Naive thymus-derived CD4-positive, alpha-beta T cell (primary cell): ENCODE measurements at regions of chr17 and their contacts with region 1.

Region 1: DNA sequence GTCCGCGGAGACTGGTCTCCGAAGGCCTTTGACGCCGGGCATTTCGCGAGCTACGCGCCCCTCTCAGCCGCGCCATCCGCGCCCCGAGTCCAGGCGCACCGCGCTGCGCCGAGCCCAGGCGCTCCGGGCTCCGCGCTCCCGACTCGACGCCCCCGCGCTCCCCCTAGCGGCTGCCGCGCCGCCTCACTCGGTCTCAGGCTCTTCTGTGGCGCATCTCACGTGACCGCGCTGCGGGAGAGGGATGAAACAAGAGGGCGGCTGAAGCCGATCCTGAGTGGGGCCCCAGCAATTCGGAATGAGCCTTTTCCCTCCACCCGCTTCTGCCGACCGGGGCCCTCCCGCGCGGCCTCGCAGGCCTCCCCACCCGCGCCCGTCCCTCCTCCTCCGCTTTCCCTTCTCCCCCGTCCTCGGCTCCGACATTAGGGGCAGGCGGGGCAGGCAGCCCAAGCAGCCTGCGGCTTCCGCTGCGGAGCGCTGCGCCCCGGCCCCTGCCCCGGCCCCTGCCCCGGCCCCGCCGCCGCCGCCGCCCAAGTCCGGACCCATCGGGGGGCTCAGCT is 42.5 kb upstream of the AMZ2 start:
- DNase-seq: peak; percentile 81 to 96 (median 91)
- ATAC-seq: peak; percentile 94
- H3K4me3 ChIP-seq: peak overlapping the region; percentile 50
- H3K4me3 Mint-ChIP-seq: peak overlapping the region; percentile 82 to 96 (median 88)
- H3K27ac ChIP-seq: peak overlapping the region; percentile 81
- H3K27ac Mint-ChIP-seq: peak overlapping the region in 7 of 9 donors; percentile 62 to 94 (median 88)
- H3K4me1 ChIP-seq: peaks cover 3 to 11% of the 10 kb centered on the region in 2 donors
- H3K4me1 Mint-ChIP-seq: peaks cover 7 to 38% (median 28%) of the 10 kb centered on the region in 7 donors
- H3K27me3 ChIP-seq: no peaks in the 10 kb centered on the region
- H3K27me3 Mint-ChIP-seq: peaks cover 0 to 12% (median 0%) of the 10 kb centered on the region in 5 donors

Region 2: DNA sequence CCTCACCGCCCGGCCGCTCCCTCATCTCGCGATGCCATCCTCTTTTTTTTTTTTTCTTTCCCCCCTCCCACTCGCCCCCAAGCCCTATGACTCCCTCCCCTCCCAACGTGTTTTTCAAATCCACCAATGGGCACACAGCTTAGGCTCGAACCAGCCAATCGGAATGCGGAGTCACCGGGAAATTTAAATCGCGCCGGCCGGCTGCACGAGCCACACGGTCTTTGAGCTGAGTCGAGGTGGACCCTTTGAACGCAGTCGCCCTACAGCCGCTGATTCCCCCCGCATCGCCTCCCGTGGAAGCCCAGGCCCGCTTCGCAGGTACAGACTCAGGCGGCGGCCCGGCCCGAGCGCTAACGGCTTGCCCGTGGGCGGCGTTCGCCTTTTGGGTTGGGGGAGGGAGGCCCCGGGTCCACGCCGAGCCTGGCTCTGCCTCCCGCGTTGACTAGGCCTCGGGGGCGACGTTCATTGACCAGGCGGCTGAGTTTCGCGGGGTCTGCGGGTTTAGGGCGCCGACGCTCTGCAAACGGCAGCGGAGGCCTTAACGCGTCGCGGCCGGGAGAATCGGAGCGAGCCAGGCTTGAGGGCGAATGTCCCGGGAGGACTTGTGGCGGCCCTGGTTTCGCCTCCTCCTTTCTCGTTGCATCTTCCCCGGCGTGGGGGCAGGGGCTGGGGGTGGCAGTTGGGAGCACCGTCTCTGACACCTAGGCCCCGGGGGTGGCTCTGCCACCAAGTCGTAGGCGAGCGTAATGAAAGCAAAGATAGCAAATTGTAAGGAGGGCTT is 169.6 kb before region 1 on chr17 and contains the start of gene KPNA2:
- CTCF ChIA-PET with region 1: no interaction called
- POLR2A ChIA-PET with region 1: no interaction called
- intact Hi-C with region 1: loop called (anchors 1 kb)
- DNase-seq: peak; percentile 70 to 95 (median 91)
- ATAC-seq: peak; percentile 94
- H3K4me3 ChIP-seq: peak within 1 kb of the TSS; percentile 71
- H3K4me3 Mint-ChIP-seq: peak within 1 kb of the TSS; percentile 83 to 97 (median 91)
- H3K27ac ChIP-seq: peak within 1 kb of the TSS; percentile 91
- H3K27ac Mint-ChIP-seq: peak within 1 kb of the TSS; percentile 83 to 97 (median 92)
- H3K4me1 ChIP-seq: peaks cover 8 to 16% of the 10 kb centered on the region in 2 donors
- H3K4me1 Mint-ChIP-seq: peaks cover 6 to 32% (median 15%) of the 10 kb centered on the region in 7 donors
- H3K27me3 ChIP-seq: no peaks in the 10 kb centered on the region
- H3K27me3 Mint-ChIP-seq: peaks cover 0 to 3% (median 0%) of the 10 kb centered on the region in 5 donors
- total RNA-seq, gene KPNA2: 8.4 to 161 (median 45.9) TPM

Region 3: GRCh38 chr17:68101075-68101992 is 104.0 kb before region 1 on chr17:
- CTCF ChIA-PET with region 1: no interaction called
- POLR2A ChIA-PET with region 1: no interaction called
- intact Hi-C with region 1: loop called in 1 of 2 experiments (anchors 5 kb)
- DNase-seq: peak in 8 of 9 donors; percentile 36 to 71 (median 46)
- ATAC-seq: peak; percentile 92
- H3K4me3 ChIP-seq: peak overlapping the region; percentile 75
- H3K4me3 Mint-ChIP-seq: peak overlapping the region; percentile 86 to 99 (median 95)
- H3K27ac ChIP-seq: peak overlapping the region; percentile 85
- H3K27ac Mint-ChIP-seq: peak overlapping the region; percentile 83 to 98 (median 95)
- H3K4me1 ChIP-seq: peaks cover 3 to 20% of the 10 kb centered on the region in 2 donors
- H3K4me1 Mint-ChIP-seq: peaks cover 15 to 42% (median 33%) of the 10 kb centered on the region in 7 donors
- H3K27me3 ChIP-seq: no peaks in the 10 kb centered on the region
- H3K27me3 Mint-ChIP-seq: peaks cover 0 to 12% (median 0%) of the 10 kb centered on the region in 5 donors

Region 4: GRCh38 chr17:68179926-68180285 is 25.4 kb before region 1 on chr17:
- CTCF ChIA-PET with region 1: interaction called, 39 read pairs
- POLR2A ChIA-PET with region 1: interaction called, 113 read pairs
- intact Hi-C with region 1: loop called (anchors 1 kb)
- DNase-seq: no peak
- ATAC-seq: no peak
- H3K4me3 ChIP-seq: no peak overlapping the region
- H3K4me3 Mint-ChIP-seq: no peak overlapping the region
- H3K27ac ChIP-seq: no peak overlapping the region
- H3K27ac Mint-ChIP-seq: peak overlapping the region in 2 of 9 donors; percentile 87 to 90
- H3K4me1 ChIP-seq: peaks cover 18 to 37% of the 10 kb centered on the region in 2 donors
- H3K4me1 Mint-ChIP-seq: peaks cover 17 to 58% (median 49%) of the 10 kb centered on the region in 7 donors
- H3K27me3 ChIP-seq: no peaks in the 10 kb centered on the region
- H3K27me3 Mint-ChIP-seq: no peaks in the 10 kb centered on the region

Region 5: DNA sequence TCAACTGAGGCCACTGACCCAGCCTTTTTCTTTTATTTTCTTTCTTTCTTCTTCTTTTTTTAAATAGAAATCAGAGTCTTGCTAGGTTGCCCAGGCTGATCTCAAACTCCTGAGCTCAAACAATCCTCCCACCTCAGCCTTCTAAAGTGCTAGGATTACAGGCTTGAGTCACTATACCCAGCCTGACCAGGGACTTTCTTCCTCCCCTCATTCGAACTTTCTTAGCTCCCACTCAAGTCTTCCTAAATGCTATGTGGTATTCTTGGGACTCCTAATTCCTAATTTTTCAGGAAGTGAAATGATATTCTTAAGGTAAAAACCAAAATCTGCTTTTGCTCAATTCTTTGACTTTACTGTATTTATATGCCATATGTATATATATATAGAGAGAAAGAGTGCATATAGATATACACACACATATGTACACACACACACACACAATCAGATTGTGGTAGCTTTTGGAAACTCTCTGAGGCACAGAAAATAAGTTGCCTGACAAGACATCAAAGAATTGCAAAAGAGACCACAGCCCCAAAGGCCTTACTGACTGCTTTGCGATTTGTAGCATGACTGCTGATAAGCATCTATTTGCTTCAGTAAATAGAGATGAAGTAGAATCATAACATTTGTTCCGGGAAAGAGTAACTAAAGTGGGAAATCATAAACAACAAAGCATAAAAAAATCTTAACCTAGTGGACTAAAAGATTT is 33.0 kb after region 1 on chr17:
- CTCF ChIA-PET with region 1: interaction called, 3 read pairs
- POLR2A ChIA-PET with region 1: interaction called, 23 read pairs
- intact Hi-C with region 1: loop called (anchors 1 to 2 kb)
- DNase-seq: peak in 5 of 9 donors; percentile 12 to 70 (median 51)
- ATAC-seq: peak; percentile 8
- H3K4me3 ChIP-seq: peak overlapping the region; percentile 61
- H3K4me3 Mint-ChIP-seq: peak overlapping the region; percentile 77 to 91 (median 86)
- H3K27ac ChIP-seq: peak overlapping the region; percentile 79
- H3K27ac Mint-ChIP-seq: peak overlapping the region; percentile 94 to 99 (median 97)
- H3K4me1 ChIP-seq: peaks cover 21 to 61% of the 10 kb centered on the region in 2 donors
- H3K4me1 Mint-ChIP-seq: peaks cover 31 to 58% (median 41%) of the 10 kb centered on the region in 7 donors
- H3K27me3 ChIP-seq: no peaks in the 10 kb centered on the region
- H3K27me3 Mint-ChIP-seq: no peaks in the 10 kb centered on the region

Region 6: DNA sequence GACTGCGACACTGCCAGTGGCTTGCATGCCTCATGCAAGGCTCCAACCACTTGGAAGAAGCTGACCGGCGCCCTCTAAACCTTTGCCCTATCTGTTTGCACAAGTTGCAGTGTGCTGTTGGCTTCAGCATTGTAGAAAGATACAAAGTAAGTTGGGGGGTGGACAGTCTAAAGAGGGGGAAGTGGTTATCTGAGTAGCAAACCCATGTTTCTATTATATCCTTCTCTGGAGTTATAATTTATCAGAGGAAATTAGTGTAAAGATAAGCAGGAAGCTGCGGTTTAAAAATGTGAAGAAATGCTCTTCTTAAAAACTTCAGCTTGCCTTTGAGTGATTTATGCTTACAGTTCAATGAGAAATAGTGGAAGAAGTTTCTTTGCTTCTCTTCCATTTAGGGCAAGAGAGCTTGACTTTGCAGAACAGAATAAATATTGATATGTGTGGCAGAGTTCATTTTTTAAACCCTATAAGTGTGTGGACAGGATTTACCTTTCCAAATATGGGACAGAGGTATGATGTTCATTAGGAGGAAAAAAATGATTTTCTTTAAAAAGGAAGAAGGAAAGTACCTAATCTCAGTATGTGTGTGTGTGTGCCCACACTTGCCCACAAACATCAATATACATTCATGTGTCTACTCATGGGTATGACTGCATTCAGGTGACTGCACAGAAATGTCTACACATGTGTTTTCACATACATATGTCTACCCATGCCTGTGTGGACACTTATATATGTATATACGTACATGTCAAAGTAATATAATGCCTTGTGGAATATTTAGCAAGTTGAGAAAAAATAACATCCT is 50.6 kb after region 1 on chr17:
- CTCF ChIA-PET with region 1: interaction called, 4 read pairs
- POLR2A ChIA-PET with region 1: interaction called, 5 read pairs
- intact Hi-C with region 1: loop called in 1 of 2 experiments (anchors 2 kb)
- DNase-seq: peak in 4 of 9 donors; percentile 27 to 44 (median 36)
- ATAC-seq: peak; percentile 32
- H3K4me3 ChIP-seq: peak overlapping the region; percentile 7
- H3K4me3 Mint-ChIP-seq: peak overlapping the region in 9 of 10 donors; percentile 18 to 70 (median 62)
- H3K27ac ChIP-seq: peak overlapping the region; percentile 92
- H3K27ac Mint-ChIP-seq: peak overlapping the region; percentile 77 to 97 (median 93)
- H3K4me1 ChIP-seq: peaks cover 74 to 91% of the 10 kb centered on the region in 2 donors
- H3K4me1 Mint-ChIP-seq: peaks cover 42 to 84% (median 75%) of the 10 kb centered on the region in 7 donors
- H3K27me3 ChIP-seq: no peaks in the 10 kb centered on the region
- H3K27me3 Mint-ChIP-seq: no peaks in the 10 kb centered on the region

Region 7: DNA sequence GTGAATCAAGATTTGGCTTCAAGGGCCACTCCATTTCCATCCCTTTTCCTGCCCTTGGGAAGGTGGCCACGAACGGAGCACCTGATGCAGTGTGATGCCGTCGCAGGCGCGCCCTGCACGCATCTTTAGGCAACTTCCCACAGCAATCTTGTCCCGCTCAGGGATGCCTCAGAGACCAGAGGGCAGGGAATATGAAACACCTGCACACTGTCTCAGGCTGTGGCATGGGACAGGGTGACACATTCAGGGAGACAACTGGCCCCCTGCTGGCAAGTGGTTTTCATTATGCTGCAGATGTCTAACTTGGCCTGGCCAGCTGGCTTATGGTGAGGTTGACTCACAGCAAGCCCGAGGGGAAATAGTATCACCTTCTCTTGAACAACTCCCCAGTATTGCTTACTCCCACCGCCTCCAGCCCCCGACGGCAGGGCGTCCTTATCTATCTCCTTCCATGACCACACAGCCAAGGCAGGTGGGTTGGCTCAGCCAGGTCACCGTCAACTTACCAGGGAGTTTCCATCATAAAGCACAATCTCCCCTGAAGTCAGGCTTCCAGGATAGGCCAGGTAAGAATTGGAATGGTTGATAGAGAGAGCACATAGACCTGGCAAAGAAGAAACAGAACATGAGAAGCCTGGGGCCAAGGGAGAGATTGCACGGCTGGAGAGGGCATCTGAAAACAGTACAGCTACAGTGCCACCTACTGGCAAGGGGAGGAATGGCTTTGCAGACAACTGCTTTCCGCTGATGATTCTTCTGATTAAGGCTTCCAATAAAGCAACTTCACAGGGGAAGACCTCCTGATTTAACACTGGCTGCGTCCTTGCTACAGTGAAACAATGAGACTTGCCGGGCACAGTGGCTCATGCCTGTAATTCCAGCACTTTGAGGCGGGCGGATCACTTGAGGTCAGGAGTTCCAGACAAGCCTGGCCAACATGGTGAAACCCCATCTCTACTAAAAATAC is 230.8 kb after region 1 on chr17:
- CTCF ChIA-PET with region 1: interaction called, 3 read pairs
- POLR2A ChIA-PET with region 1: interaction called, 7 read pairs
- intact Hi-C with region 1: loop called (anchors 1 to 2 kb)
- DNase-seq: peak; percentile 62 to 87 (median 82)
- ATAC-seq: peak; percentile 90
- H3K4me3 ChIP-seq: no peak overlapping the region
- H3K4me3 Mint-ChIP-seq: peak overlapping the region; percentile 3 to 78 (median 62)
- H3K27ac ChIP-seq: no peak overlapping the region
- H3K27ac Mint-ChIP-seq: peak overlapping the region; percentile 1 to 94 (median 41)
- H3K4me1 ChIP-seq: peaks cover 32% of the 10 kb centered on the region in 2 donors
- H3K4me1 Mint-ChIP-seq: peaks cover 30 to 67% (median 51%) of the 10 kb centered on the region in 7 donors
- H3K27me3 ChIP-seq: no peaks in the 10 kb centered on the region
- H3K27me3 Mint-ChIP-seq: no peaks in the 10 kb centered on the region